ENCODE measurements at regions of chr3 and their contacts with region 1.

Region 1: DNA sequence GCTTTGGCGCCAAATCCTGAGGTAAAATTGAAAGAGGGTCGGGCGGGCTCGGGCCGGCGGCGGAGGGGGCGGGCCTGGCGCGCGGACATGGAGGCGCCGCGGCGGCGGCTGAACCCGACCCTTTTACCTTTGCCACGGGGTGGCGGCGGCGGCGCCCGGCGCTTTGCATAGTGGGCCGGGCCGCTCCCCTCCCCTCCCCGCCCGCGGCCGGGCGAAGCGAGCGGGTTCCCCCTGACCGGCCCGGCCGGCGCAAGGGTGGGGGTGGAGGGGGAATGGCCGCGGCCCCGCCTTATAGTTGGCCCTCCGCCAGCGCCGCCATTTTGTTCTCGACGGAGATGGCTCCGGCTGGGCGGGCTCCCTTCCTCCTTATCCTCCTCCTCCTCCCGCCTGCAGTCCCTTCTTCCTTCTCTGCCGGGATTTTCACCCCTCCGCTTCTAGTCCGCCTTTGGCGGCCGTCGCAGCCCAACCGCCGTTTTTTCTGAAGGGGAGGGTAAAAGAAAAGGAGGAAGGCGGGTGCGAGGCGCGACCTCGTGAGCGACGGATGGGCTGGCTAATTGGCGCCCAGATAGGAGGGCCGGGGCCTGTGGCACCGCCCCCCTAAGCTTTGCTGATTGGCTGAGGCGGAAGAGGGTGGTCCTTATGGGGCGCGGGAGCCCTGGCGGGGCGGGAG is 638 bp downstream of the NR2C2 start:
- DNase-seq: peak; percentile 92
- H3K4me3 ChIP-seq: peak overlapping the region; percentile 84 to 98 (median 93)
- H3K27ac ChIP-seq: peak overlapping the region; percentile 92
- H3K4me1 ChIP-seq: peaks cover 14% of the 10 kb centered on the region
- H3K27me3 ChIP-seq: no peaks in the 10 kb centered on the region
- CTCF ChIP-seq: no peak

Region 2: GRCh38 chr3:12994607-12995388 is 1953.2 kb before region 1 on chr3:
- CTCF ChIA-PET with region 1: interaction called, 16 read pairs
- dilution Hi-C with region 1: no loop called
- in situ Hi-C with region 1: no loop called
- intact Hi-C with region 1: no loop called
- DNase-seq: peak; percentile 68
- H3K4me3 ChIP-seq: peak overlapping the region; percentile 57 to 63 (median 62)
- H3K27ac ChIP-seq: no peak overlapping the region
- H3K4me1 ChIP-seq: peaks cover 17% of the 10 kb centered on the region
- H3K27me3 ChIP-seq: peaks cover 6% of the 10 kb centered on the region
- CTCF ChIP-seq: peak; percentile 53 to 84

Region 3: DNA sequence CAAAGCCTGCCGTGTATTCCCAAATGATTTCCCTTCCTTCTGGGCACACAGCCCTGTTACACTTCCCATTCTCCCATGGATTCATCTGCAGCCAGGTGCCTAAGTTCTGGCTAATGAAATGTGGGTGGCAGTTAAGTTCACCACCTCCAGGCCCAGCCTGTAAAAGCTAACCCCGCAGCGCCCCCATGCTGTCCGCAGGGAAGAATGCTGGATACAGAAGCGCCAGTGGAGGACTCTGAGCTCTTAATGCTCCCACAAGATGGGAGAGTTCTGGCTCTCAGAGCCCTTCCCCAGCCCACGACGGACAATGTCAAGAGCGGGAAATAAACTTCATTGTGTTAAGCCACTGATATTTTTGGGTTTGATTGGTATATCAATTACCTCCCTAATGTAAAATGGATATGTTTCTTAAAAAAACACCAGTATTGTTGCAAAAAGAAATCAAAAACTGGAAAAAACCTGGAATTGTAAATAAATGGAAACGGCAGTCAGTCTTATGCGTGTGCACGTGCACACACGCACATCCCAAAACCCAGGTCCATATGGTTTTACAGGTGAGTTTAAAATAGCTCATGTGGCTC is 167.0 kb before region 1 on chr3:
- CTCF ChIA-PET with region 1: no interaction called
- dilution Hi-C with region 1: no loop called
- in situ Hi-C with region 1: no loop called
- intact Hi-C with region 1: no loop called
- DNase-seq: peak; percentile 39
- H3K4me3 ChIP-seq: no peak overlapping the region
- H3K27ac ChIP-seq: no peak overlapping the region
- H3K4me1 ChIP-seq: no peaks in the 10 kb centered on the region
- H3K27me3 ChIP-seq: no peaks in the 10 kb centered on the region
- CTCF ChIP-seq: peak; percentile 43 to 65

Region 4: DNA sequence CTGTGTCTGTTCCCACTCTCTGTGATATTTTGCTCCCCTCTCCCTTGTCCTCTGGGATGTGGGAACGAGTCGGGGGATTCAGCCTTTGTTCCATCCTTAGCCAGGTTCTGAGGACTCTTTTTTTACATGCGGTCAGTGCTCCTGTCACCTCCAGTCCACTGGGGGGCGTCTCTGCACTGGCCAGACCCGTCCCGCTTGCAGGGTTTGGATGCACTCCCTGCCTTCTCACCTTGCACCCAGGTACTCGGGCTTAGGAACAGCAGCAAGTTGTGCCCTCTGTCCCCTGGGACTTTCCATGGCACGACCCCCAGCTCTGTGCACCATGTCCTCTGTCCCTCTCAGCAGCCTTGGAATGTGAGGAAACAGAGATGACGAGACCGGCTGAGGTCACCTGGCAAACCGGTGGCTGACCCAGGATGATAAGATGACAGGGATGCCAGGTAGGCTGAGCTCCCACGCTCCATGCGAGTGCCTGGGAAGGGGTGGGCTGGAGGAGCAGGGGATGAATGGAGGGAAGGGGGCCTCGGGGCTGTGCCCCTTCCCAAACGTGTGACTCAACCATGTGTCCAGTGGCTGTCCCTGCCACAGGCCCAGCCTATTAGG is 156.6 kb before region 1 on chr3:
- CTCF ChIA-PET with region 1: no interaction called
- dilution Hi-C with region 1: no loop called
- in situ Hi-C with region 1: no loop called
- intact Hi-C with region 1: no loop called
- DNase-seq: peak; percentile 26
- H3K4me3 ChIP-seq: no peak overlapping the region
- H3K27ac ChIP-seq: no peak overlapping the region
- H3K4me1 ChIP-seq: no peaks in the 10 kb centered on the region
- H3K27me3 ChIP-seq: peaks cover 4% of the 10 kb centered on the region
- CTCF ChIP-seq: peak; percentile 52 to 82

Region 5: DNA sequence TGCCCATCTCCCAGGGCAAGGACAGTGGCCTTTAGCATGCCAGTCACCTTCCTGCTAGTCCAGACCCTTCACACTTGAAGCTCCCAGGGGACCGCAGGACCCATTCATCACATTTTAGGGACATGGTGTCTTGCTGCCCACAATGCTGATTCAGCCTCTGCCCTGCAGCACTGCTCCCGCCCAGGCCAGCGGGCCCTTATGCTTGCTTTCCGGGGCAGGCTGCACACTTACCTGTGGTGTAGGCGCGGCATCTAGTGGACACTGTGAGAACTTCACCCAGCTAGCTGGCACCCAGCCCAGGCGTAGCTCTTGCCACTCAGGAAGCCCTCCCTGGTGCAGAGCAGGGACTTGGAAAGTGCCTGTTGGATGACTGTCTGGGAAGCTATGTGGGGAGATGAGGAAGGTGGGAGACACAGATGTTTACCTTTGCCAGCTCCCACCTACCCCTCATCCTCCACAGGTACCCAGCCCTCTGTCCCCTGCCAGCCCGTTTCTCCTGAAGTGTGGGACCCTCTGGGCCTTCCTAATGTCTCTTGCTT is 26.9 kb before region 1 on chr3:
- CTCF ChIA-PET with region 1: no interaction called
- dilution Hi-C with region 1: no loop called
- in situ Hi-C with region 1: no loop called
- intact Hi-C with region 1: no loop called
- DNase-seq: peak; percentile 69
- H3K4me3 ChIP-seq: no peak overlapping the region
- H3K27ac ChIP-seq: no peak overlapping the region
- H3K4me1 ChIP-seq: peaks cover 5% of the 10 kb centered on the region
- H3K27me3 ChIP-seq: peaks cover 4% of the 10 kb centered on the region
- CTCF ChIP-seq: peak; percentile 85 to 99

Region 6: GRCh38 chr3:15007681-15008141 is 59.7 kb after region 1 on chr3:
- CTCF ChIA-PET with region 1: no interaction called
- dilution Hi-C with region 1: no loop called
- in situ Hi-C with region 1: no loop called
- intact Hi-C with region 1: loop called (anchors 5 kb)
- DNase-seq: peak; percentile 9
- H3K4me3 ChIP-seq: no peak overlapping the region
- H3K27ac ChIP-seq: no peak overlapping the region
- H3K4me1 ChIP-seq: peaks cover 16% of the 10 kb centered on the region
- H3K27me3 ChIP-seq: no peaks in the 10 kb centered on the region
- CTCF ChIP-seq: no peak

Region 7: GRCh38 chr3:15098503-15099363 is 150.7 kb after region 1 on chr3 and contains the start of gene RBSN:
- CTCF ChIA-PET with region 1: no interaction called
- dilution Hi-C with region 1: no loop called
- in situ Hi-C with region 1: no loop called
- intact Hi-C with region 1: loop called (anchors 5 kb)
- DNase-seq: peak; percentile 94
- H3K4me3 ChIP-seq: peak within 1 kb of the TSS; percentile 87 to 95 (median 95)
- H3K27ac ChIP-seq: peak within 1 kb of the TSS; percentile 76
- H3K4me1 ChIP-seq: peaks cover 13% of the 10 kb centered on the region
- H3K27me3 ChIP-seq: no peaks in the 10 kb centered on the region
- CTCF ChIP-seq: no peak
- total RNA-seq, gene RBSN: 21.7 to 23.1 TPM

Measured in mammary epithelial cell (primary cell).